ENCODE measurements at regions of chr1 and their contacts with region 1.

Region 1: GRCh38 chr1:231528172-231529029 is at the start of gene TSNAX:
- DNase-seq: peak; percentile 84 to 94 (median 92)
- H3K4me3 ChIP-seq: peak within 1 kb of the TSS; percentile 77
- H3K4me3 Mint-ChIP-seq: peak within 1 kb of the TSS; percentile 94 to 99 (median 97)
- H3K27ac ChIP-seq: peak within 1 kb of the TSS; percentile 95
- H3K27ac Mint-ChIP-seq: peak within 1 kb of the TSS; percentile 95 to 100 (median 100)
- H3K4me1 ChIP-seq: peaks cover 36% of the 10 kb centered on the region
- H3K4me1 Mint-ChIP-seq: peaks cover 39 to 53% (median 52%) of the 10 kb centered on the region in 3 donors
- H3K27me3 ChIP-seq: no peaks in the 10 kb centered on the region
- H3K27me3 Mint-ChIP-seq: no peaks in the 10 kb centered on the region
- total RNA-seq, gene TSNAX: 48.0 to 49.8 TPM

Region 2: GRCh38 chr1:231421993-231422764 is 106.2 kb before region 1 on chr1 and contains the start of gene EGLN1:
- CTCF ChIA-PET with region 1: interaction called, 6 read pairs
- POLR2A ChIA-PET with region 1: interaction called, 13 read pairs
- DNase-seq: peak; percentile 70 to 86 (median 81)
- H3K4me3 ChIP-seq: peak within 1 kb of the TSS; percentile 77
- H3K4me3 Mint-ChIP-seq: peak within 1 kb of the TSS; percentile 88 to 99 (median 98)
- H3K27ac ChIP-seq: peak within 1 kb of the TSS; percentile 77
- H3K27ac Mint-ChIP-seq: peak within 1 kb of the TSS; percentile 61 to 97 (median 90)
- H3K4me1 ChIP-seq: peaks cover 30% of the 10 kb centered on the region
- H3K4me1 Mint-ChIP-seq: peaks cover 41 to 46% (median 45%) of the 10 kb centered on the region in 3 donors
- H3K27me3 ChIP-seq: no peaks in the 10 kb centered on the region
- H3K27me3 Mint-ChIP-seq: peaks cover 0 to 7% of the 10 kb centered on the region in 2 donors
- total RNA-seq, gene EGLN1: 21.0 to 24.2 TPM

Region 3: GRCh38 chr1:231467986-231468385 is 60.4 kb before region 1 on chr1:
- CTCF ChIA-PET with region 1: no interaction called
- POLR2A ChIA-PET with region 1: no interaction called
- DNase-seq: no peak
- H3K4me3 ChIP-seq: no peak overlapping the region
- H3K4me3 Mint-ChIP-seq: no peak overlapping the region
- H3K27ac ChIP-seq: no peak overlapping the region
- H3K27ac Mint-ChIP-seq: no peak overlapping the region
- H3K4me1 ChIP-seq: no peaks in the 10 kb centered on the region
- H3K4me1 Mint-ChIP-seq: no peaks in the 10 kb centered on the region
- H3K27me3 ChIP-seq: peaks cover 4% of the 10 kb centered on the region
- H3K27me3 Mint-ChIP-seq: peaks cover 20 to 55% of the 10 kb centered on the region in 2 donors